T-cell (primary cell): ENCODE measurements at regions of chr12 and their contacts with region 1.

Region 1: GRCh38 chr12:14239350-14239934 is 126.0 kb upstream of the ATF7IP start:
- DNase-seq: peak in 11 of 35 experiments; percentile 10 to 46 (median 21)
- ATAC-seq: peak; percentile 54 to 66 (median 64)
- H3K4me3 ChIP-seq: peak overlapping the region; percentile 45 to 46
- H3K4me3 Mint-ChIP-seq: peak overlapping the region; percentile 78 to 83 (median 82)
- H3K27ac ChIP-seq: peak overlapping the region; percentile 59
- H3K27ac Mint-ChIP-seq: peak overlapping the region; percentile 89 to 92
- H3K4me1 ChIP-seq: peaks cover 6 to 16% of the 10 kb centered on the region in 2 experiments
- H3K4me1 Mint-ChIP-seq: peaks cover 17 to 24% (median 22%) of the 10 kb centered on the region in 3 donors
- H3K27me3 ChIP-seq: no peaks in the 10 kb centered on the region
- H3K27me3 Mint-ChIP-seq: no peaks in the 10 kb centered on the region

Region 2: GRCh38 chr12:14111230-14111865 is 128.1 kb before region 1 on chr12:
- CTCF ChIA-PET with region 1: no interaction called
- POLR2A ChIA-PET with region 1: no interaction called
- DNase-seq: peak in 2 of 35 experiments; percentile 1
- ATAC-seq: no peak
- H3K4me3 ChIP-seq: no peak overlapping the region
- H3K4me3 Mint-ChIP-seq: no peak overlapping the region
- H3K27ac ChIP-seq: no peak overlapping the region
- H3K27ac Mint-ChIP-seq: no peak overlapping the region
- H3K4me1 ChIP-seq: no peaks in the 10 kb centered on the region
- H3K4me1 Mint-ChIP-seq: peaks cover 0 to 6% (median 0%) of the 10 kb centered on the region in 3 donors
- H3K27me3 ChIP-seq: no peaks in the 10 kb centered on the region
- H3K27me3 Mint-ChIP-seq: peaks cover 13 to 20% of the 10 kb centered on the region in 2 donors

Region 3: GRCh38 chr12:14314801-14315200 is 75.4 kb after region 1 on chr12:
- CTCF ChIA-PET with region 1: no interaction called
- POLR2A ChIA-PET with region 1: no interaction called
- DNase-seq: no peak
- ATAC-seq: no peak
- H3K4me3 ChIP-seq: no peak overlapping the region
- H3K4me3 Mint-ChIP-seq: no peak overlapping the region
- H3K27ac ChIP-seq: no peak overlapping the region
- H3K27ac Mint-ChIP-seq: no peak overlapping the region
- H3K4me1 ChIP-seq: no peaks in the 10 kb centered on the region
- H3K4me1 Mint-ChIP-seq: no peaks in the 10 kb centered on the region
- H3K27me3 ChIP-seq: no peaks in the 10 kb centered on the region
- H3K27me3 Mint-ChIP-seq: no peaks in the 10 kb centered on the region

Region 4: GRCh38 chr12:14365294-14366208 is 126.1 kb after region 1 on chr12 and contains the start of gene ATF7IP:
- CTCF ChIA-PET with region 1: interaction called, 6 to 60 read pairs
- POLR2A ChIA-PET with region 1: interaction called, 3 read pairs
- DNase-seq: peak; percentile 89 to 99 (median 96)
- ATAC-seq: peak; percentile 84 to 94 (median 92)
- H3K4me3 ChIP-seq: peak within 1 kb of the TSS; percentile 63 to 75
- H3K4me3 Mint-ChIP-seq: peak within 1 kb of the TSS; percentile 75 to 90 (median 85)
- H3K27ac ChIP-seq: peak within 1 kb of the TSS; percentile 97
- H3K27ac Mint-ChIP-seq: peak within 1 kb of the TSS; percentile 95 to 98
- H3K4me1 ChIP-seq: peaks cover 15 to 22% of the 10 kb centered on the region in 2 experiments
- H3K4me1 Mint-ChIP-seq: peaks cover 37 to 47% (median 44%) of the 10 kb centered on the region in 3 donors
- H3K27me3 ChIP-seq: no peaks in the 10 kb centered on the region
- H3K27me3 Mint-ChIP-seq: no peaks in the 10 kb centered on the region
- total RNA-seq, gene ATF7IP: 112 to 165 (median 147) TPM

Region 5: DNA sequence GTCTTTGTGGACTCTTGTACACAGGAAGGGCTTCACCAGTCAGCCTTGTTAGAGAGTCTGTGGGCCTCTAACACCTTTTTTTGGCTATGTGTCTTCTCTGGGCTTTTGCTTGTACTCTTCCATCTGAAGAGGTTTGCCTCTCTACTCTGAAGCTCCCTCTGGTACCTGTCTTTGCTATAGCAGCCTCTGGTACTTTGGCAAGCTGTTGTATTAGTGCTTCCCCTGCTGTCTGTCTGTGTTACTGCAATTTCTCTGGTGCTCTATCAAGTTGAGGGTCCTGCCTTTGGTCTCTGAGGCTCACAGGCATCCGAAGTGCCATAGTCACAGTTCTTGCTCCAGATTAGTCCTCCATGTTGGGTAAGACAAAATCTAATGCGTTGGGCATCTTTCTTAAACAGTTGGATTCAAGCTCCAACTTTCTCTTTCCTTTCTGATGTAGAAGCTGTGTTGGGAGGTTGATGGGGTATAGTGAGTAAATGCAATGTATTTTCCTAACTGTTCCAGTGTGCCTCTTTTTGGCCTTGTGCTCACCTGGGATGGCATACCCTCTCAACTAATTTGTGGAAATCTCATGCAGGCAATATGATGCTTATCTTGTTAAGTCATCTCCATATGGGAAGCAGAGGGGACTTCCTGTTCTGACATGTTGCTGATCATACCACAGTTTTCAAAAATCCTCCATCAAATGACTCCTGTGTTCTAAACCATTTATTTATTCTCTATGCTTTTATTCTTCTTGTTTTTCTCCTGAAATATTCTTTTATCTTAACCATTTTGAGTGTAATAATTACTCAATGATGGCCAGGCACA is 214.9 kb after region 1 on chr12:
- CTCF ChIA-PET with region 1: interaction called, 7 to 38 read pairs
- POLR2A ChIA-PET with region 1: no interaction called
- DNase-seq: peak in 13 of 35 experiments; percentile 1 to 58 (median 13)
- ATAC-seq: peak; percentile 52 to 74 (median 66)
- H3K4me3 ChIP-seq: no peak overlapping the region
- H3K4me3 Mint-ChIP-seq: peak overlapping the region in 1 of 3 donors; percentile 25
- H3K27ac ChIP-seq: peak overlapping the region; percentile 6
- H3K27ac Mint-ChIP-seq: peak overlapping the region; percentile 69 to 71
- H3K4me1 ChIP-seq: peaks cover 5 to 12% of the 10 kb centered on the region in 2 experiments
- H3K4me1 Mint-ChIP-seq: peaks cover 49 to 59% (median 59%) of the 10 kb centered on the region in 3 donors
- H3K27me3 ChIP-seq: no peaks in the 10 kb centered on the region
- H3K27me3 Mint-ChIP-seq: no peaks in the 10 kb centered on the region

Region 6: DNA sequence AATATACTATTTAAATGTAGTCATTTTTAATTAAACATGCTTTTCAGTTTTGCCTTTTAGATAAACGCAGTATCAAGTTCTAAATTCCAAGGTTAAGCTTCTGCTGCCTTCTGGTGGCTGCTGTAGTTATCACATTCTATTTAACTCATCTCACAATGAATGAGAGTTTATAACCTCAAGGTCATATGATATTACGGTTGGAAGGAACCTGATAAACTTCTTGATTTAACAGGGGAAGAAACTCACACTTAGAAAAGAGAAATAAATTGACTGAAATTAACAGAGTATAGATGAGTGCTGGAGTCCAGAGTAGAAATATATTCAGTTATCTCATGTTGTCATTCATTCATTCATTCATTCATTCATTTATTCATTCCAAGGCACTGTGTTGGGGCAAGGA is 425.1 kb after region 1 on chr12:
- CTCF ChIA-PET with region 1: interaction called, 9 to 20 read pairs
- POLR2A ChIA-PET with region 1: no interaction called
- DNase-seq: peak in 26 of 35 experiments; percentile 4 to 71 (median 22)
- ATAC-seq: peak; percentile 54 to 83 (median 60)
- H3K4me3 ChIP-seq: no peak overlapping the region
- H3K4me3 Mint-ChIP-seq: no peak overlapping the region
- H3K27ac ChIP-seq: no peak overlapping the region
- H3K27ac Mint-ChIP-seq: no peak overlapping the region
- H3K4me1 ChIP-seq: no peaks in the 10 kb centered on the region
- H3K4me1 Mint-ChIP-seq: peaks cover 6 to 13% (median 6%) of the 10 kb centered on the region in 3 donors
- H3K27me3 ChIP-seq: no peaks in the 10 kb centered on the region
- H3K27me3 Mint-ChIP-seq: peaks cover 2 to 6% of the 10 kb centered on the region in 2 donors